WTC11 (cell line): ENCODE measurements at regions of chr12 and their contacts with region 1.

Region 1: GRCh38 chr12:188910-189621 is 24.9 kb downstream of the SLC6A12 start:
- DNase-seq: peak; percentile 75
- ATAC-seq: peak; percentile 84
- H3K4me3 Mint-ChIP-seq: peak overlapping the region; percentile 85
- H3K27ac Mint-ChIP-seq: no peak overlapping the region
- H3K4me1 Mint-ChIP-seq: no peaks in the 10 kb centered on the region
- H3K27me3 Mint-ChIP-seq: peaks cover 45% of the 10 kb centered on the region
- CTCF ChIP-seq: peak; percentile 54; the same call in 1 of the 2 replicates

Region 2: GRCh38 chr12:106118-106591 is 82.9 kb before region 1 on chr12:
- CTCF ChIA-PET with region 1: interaction called, 11 read pairs
- POLR2A ChIA-PET with region 1: no interaction called
- DNase-seq: peak; percentile 46
- ATAC-seq: peak; percentile 57
- H3K4me3 Mint-ChIP-seq: no peak overlapping the region
- H3K27ac Mint-ChIP-seq: peak overlapping the region; percentile 8; the same call in 1 of the 2 replicates
- H3K4me1 Mint-ChIP-seq: peaks cover 58% of the 10 kb centered on the region
- H3K27me3 Mint-ChIP-seq: peaks cover 3% of the 10 kb centered on the region; the same call in 1 of the 2 replicates
- CTCF ChIP-seq: no peak

Region 3: DNA sequence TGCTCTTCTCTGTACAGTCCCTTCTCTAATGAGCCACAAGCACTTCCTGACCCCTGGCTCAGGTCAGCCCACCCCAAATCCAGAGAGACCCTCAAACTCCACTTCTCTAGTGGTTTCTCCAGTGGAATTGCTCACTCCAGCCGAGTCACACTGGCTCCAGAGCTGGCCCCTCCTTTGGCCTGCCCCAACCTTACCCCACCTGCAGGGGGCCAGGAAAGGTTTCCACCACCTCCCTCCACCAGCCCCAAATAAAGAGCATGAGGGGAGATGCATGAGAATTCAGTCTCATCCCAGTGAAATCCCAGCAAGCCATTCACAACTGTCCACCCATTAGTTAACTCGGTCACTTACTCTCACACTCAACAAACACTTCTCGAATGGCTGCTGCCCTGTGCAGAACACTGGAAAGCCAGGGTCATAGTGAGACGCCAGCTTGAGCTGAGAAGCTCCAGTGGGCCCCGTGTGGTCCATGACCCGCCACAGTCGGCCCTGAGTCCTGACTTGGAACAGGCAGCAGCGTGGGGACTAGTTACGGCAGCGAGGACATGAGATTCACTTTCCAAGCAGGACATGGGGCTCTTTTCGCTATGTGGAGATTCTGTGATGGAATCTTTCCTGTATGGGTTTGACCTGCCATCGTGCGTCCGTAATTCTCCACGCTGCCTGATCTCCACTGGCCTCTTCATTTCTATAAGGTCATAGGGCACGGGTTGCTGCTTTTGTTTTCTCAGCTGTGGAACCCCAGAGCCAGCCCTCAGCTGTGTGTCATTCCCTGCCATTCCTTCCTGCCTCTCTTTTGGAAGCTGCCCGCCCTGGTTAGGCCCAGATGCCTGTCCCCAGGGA is 19.3 kb before region 1 on chr12:
- CTCF ChIA-PET with region 1: interaction called, 18 read pairs
- POLR2A ChIA-PET with region 1: no interaction called
- DNase-seq: no peak
- ATAC-seq: peak; percentile 38
- H3K4me3 Mint-ChIP-seq: no peak overlapping the region
- H3K27ac Mint-ChIP-seq: no peak overlapping the region
- H3K4me1 Mint-ChIP-seq: peaks cover 52% of the 10 kb centered on the region
- H3K27me3 Mint-ChIP-seq: peaks cover 8% of the 10 kb centered on the region
- CTCF ChIP-seq: no peak

Region 4: GRCh38 chr12:176321-177181 is 12.5 kb before region 1 on chr12:
- CTCF ChIA-PET with region 1: interaction called, 19 read pairs
- POLR2A ChIA-PET with region 1: no interaction called
- DNase-seq: no peak
- ATAC-seq: no peak
- H3K4me3 Mint-ChIP-seq: no peak overlapping the region
- H3K27ac Mint-ChIP-seq: peak overlapping the region; percentile 11; the same call in 1 of the 2 replicates
- H3K4me1 Mint-ChIP-seq: peaks cover 28% of the 10 kb centered on the region
- H3K27me3 Mint-ChIP-seq: no peaks in the 10 kb centered on the region; the same call in 1 of the 2 replicates
- CTCF ChIP-seq: no peak

Region 5: GRCh38 chr12:203462-204260 is 14.6 kb after region 1 on chr12:
- CTCF ChIA-PET with region 1: interaction called, 28 read pairs
- POLR2A ChIA-PET with region 1: no interaction called
- DNase-seq: peak; percentile 59
- ATAC-seq: peak; percentile 58
- H3K4me3 Mint-ChIP-seq: peak overlapping the region; percentile 68
- H3K27ac Mint-ChIP-seq: no peak overlapping the region
- H3K4me1 Mint-ChIP-seq: peaks cover 24% of the 10 kb centered on the region
- H3K27me3 Mint-ChIP-seq: peaks cover 58% of the 10 kb centered on the region
- CTCF ChIP-seq: no peak